H1 (cell line): ENCODE measurements at regions of chr10 and their contacts with region 1.

Region 1: DNA sequence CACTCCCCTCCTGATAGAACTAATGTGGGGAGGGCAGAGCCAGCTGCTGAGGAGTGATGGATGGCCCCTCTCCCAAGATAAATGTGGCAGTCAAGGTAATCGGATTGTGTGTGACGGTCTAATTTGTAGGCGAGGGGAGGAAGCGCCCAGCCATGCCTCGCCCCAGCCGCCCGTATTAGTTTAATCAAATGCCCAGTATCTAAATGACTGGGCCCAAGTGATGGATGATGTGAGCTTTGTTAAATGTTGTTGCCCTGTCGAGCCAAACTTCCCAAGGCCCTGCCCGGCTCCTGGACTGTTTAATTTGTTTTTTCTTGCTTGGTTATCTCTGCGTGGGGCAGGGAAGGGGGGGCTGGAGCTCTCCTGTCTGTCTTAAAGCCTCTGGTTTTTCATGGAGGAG is 88.4 kb upstream of the PPIF start:
- DNase-seq: no peak
- H3K4me3 ChIP-seq: no peak overlapping the region
- H3K27ac ChIP-seq: no peak overlapping the region
- H3K4me1 ChIP-seq: peaks cover 0 to 14% (median 6%) of the 10 kb centered on the region in 4 experiments; a peak in 6 of 7 replicates
- H3K27me3 ChIP-seq: no peaks in the 10 kb centered on the region; a peak in 1 of 7 replicates
- CTCF ChIP-seq: no peak
- EP300 ChIP-seq: no peak
- POLR2A ChIP-seq: no peak
- RAD21 ChIP-seq: no peak

Region 2: GRCh38 chr10:79188154-79188960 is 70.5 kb before region 1 on chr10:
- CTCF ChIA-PET with region 1: no interaction called
- POLR2A ChIA-PET with region 1: no interaction called
- DNase-seq: no peak
- H3K4me3 ChIP-seq: no peak overlapping the region
- H3K27ac ChIP-seq: no peak overlapping the region
- H3K4me1 ChIP-seq: peaks cover 0 to 15% (median 9%) of the 10 kb centered on the region in 4 experiments; a peak in 6 of 7 replicates
- H3K27me3 ChIP-seq: no peaks in the 10 kb centered on the region
- CTCF ChIP-seq: no peak
- EP300 ChIP-seq: no peak
- POLR2A ChIP-seq: no peak
- RAD21 ChIP-seq: no peak

Region 3: GRCh38 chr10:79244841-79245504 is 13.9 kb before region 1 on chr10:
- CTCF ChIA-PET with region 1: interaction called, 14 read pairs
- POLR2A ChIA-PET with region 1: interaction called, 6 read pairs
- DNase-seq: no peak
- H3K4me3 ChIP-seq: no peak overlapping the region
- H3K27ac ChIP-seq: no peak overlapping the region
- H3K4me1 ChIP-seq: peaks cover 11 to 24% (median 17%) of the 10 kb centered on the region in 4 experiments
- H3K27me3 ChIP-seq: peaks cover 15 to 36% (median 34%) of the 10 kb centered on the region in 4 experiments
- CTCF ChIP-seq: no peak
- EP300 ChIP-seq: no peak
- POLR2A ChIP-seq: no peak
- RAD21 ChIP-seq: no peak